A549 (cell line): ENCODE measurements at regions of chr1 and their contacts with region 1.

Region 1: GRCh38 chr1:168082008-168082876 is 54.5 kb downstream of the GPR161 start:
- DNase-seq: peak; percentile 75 to 77
- ATAC-seq: peak; percentile 89 to 92
- H3K4me3 ChIP-seq: no peak overlapping the region
- H3K27ac ChIP-seq: no peak overlapping the region
- H3K4me1 ChIP-seq: no peaks in the 10 kb centered on the region
- CTCF ChIP-seq: peak; percentile 76
- EP300 ChIP-seq: no peak
- POLR2A ChIP-seq: no peak
- RAD21 ChIP-seq: peak; percentile 75 to 85

Region 2: DNA sequence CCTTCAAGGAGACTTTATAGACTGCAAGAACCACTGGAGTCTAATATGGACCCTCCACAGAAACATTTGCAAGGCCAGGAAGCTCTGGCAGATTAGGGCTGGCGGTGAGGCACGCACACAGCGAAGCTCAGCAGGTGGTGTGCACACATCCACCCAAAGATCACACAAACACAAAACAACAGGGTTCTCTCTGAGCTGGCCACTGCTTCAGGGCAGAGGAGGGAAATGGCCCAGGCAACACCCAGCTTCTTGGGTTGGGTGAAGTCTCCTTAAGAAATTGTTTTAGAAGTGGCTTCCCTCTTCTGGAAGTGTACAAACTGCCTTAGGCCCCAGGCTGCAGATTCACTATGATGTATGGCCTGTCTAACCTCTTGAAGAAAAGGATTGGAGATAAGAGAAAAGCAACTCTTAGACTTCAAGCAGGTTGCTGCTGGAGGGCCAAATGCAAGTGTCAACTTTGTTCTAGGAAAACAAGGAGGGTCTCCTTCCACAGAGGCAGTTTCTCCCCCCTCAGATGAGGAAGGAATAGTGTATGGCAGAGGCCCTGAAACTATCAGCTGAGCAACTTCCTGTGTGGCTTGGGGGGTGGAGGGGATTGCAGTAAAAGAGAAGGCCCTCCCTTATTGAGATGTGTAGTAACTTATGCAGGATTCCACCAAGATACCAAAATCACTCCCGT is 450.2 kb before region 1 on chr1:
- CTCF ChIA-PET with region 1: no interaction called
- POLR2A ChIA-PET with region 1: no interaction called
- DNase-seq: no peak
- ATAC-seq: no peak
- H3K4me3 ChIP-seq: no peak overlapping the region
- H3K27ac ChIP-seq: no peak overlapping the region
- H3K4me1 ChIP-seq: peaks cover 7% of the 10 kb centered on the region; the same call in 1 of the 3 replicates
- CTCF ChIP-seq: no peak
- EP300 ChIP-seq: no peak
- POLR2A ChIP-seq: no peak
- RAD21 ChIP-seq: no peak

Region 3: DNA sequence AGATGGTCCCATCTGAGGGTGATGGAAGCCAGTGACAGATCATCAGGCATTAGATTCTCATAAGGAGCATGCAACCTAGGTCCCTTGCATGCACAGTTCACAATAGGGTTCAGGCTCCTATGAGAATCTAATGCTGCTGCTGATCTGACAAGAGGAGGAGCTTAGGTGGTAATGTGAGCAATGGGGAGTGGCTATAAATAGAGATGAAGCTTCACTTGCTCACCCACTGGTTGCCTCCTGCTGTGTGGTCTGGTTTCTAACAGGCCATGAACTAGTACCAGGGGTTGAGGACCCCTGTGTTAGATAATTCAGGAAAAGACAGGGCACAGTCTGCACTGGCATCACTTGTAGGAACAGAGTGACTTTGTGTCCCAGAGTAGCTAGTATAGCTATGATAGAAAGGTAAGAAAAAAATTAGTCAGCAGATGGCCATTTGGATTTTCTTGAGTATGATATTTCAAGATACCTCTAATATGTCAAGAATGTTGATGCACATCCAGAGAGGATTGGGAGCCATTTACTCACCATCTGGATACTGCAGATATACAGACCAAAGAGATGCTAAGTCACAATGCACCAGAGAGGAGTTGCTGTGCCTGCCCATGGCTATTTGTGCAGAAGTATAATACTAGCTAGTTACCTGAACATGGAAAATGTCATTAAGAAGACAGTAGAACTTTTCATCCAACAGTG is 221.9 kb before region 1 on chr1:
- CTCF ChIA-PET with region 1: no interaction called
- POLR2A ChIA-PET with region 1: no interaction called
- DNase-seq: no peak
- ATAC-seq: no peak
- H3K4me3 ChIP-seq: no peak overlapping the region
- H3K27ac ChIP-seq: no peak overlapping the region
- H3K4me1 ChIP-seq: no peaks in the 10 kb centered on the region
- CTCF ChIP-seq: no peak
- EP300 ChIP-seq: no peak
- POLR2A ChIP-seq: no peak
- RAD21 ChIP-seq: no peak

Region 4: GRCh38 chr1:168009322-168009721 is 72.9 kb before region 1 on chr1:
- CTCF ChIA-PET with region 1: interaction called, 11 read pairs
- POLR2A ChIA-PET with region 1: no interaction called
- DNase-seq: no peak
- ATAC-seq: no peak
- H3K4me3 ChIP-seq: no peak overlapping the region
- H3K27ac ChIP-seq: no peak overlapping the region
- H3K4me1 ChIP-seq: no peaks in the 10 kb centered on the region
- CTCF ChIP-seq: no peak
- EP300 ChIP-seq: no peak
- POLR2A ChIP-seq: no peak
- RAD21 ChIP-seq: no peak

Region 5: GRCh38 chr1:168065506-168065905 is 16.7 kb before region 1 on chr1:
- CTCF ChIA-PET with region 1: interaction called, 100 read pairs
- POLR2A ChIA-PET with region 1: no interaction called
- DNase-seq: no peak
- ATAC-seq: no peak
- H3K4me3 ChIP-seq: no peak overlapping the region
- H3K27ac ChIP-seq: no peak overlapping the region
- H3K4me1 ChIP-seq: no peaks in the 10 kb centered on the region
- CTCF ChIP-seq: no peak
- EP300 ChIP-seq: no peak
- POLR2A ChIP-seq: no peak
- RAD21 ChIP-seq: no peak

Region 6: GRCh38 chr1:168092566-168093355 is 10.5 kb after region 1 on chr1:
- CTCF ChIA-PET with region 1: interaction called, 94 read pairs
- POLR2A ChIA-PET with region 1: interaction called, 3 read pairs
- DNase-seq: peak in 1 of 2 experiments; percentile 61
- ATAC-seq: peak; percentile 54 to 78; a peak in 5 of 6 replicates
- H3K4me3 ChIP-seq: no peak overlapping the region
- H3K27ac ChIP-seq: no peak overlapping the region
- H3K4me1 ChIP-seq: peaks cover 13% of the 10 kb centered on the region
- CTCF ChIP-seq: peak; percentile 43
- EP300 ChIP-seq: no peak
- POLR2A ChIP-seq: no peak
- RAD21 ChIP-seq: peak; percentile 52 to 63

Region 7: GRCh38 chr1:168125051-168125450 is 42.8 kb after region 1 on chr1:
- CTCF ChIA-PET with region 1: interaction called, 12 read pairs
- POLR2A ChIA-PET with region 1: no interaction called
- DNase-seq: no peak
- ATAC-seq: no peak
- H3K4me3 ChIP-seq: no peak overlapping the region
- H3K27ac ChIP-seq: no peak overlapping the region
- H3K4me1 ChIP-seq: no peaks in the 10 kb centered on the region
- CTCF ChIP-seq: no peak
- EP300 ChIP-seq: no peak
- POLR2A ChIP-seq: no peak
- RAD21 ChIP-seq: no peak

Region 8: DNA sequence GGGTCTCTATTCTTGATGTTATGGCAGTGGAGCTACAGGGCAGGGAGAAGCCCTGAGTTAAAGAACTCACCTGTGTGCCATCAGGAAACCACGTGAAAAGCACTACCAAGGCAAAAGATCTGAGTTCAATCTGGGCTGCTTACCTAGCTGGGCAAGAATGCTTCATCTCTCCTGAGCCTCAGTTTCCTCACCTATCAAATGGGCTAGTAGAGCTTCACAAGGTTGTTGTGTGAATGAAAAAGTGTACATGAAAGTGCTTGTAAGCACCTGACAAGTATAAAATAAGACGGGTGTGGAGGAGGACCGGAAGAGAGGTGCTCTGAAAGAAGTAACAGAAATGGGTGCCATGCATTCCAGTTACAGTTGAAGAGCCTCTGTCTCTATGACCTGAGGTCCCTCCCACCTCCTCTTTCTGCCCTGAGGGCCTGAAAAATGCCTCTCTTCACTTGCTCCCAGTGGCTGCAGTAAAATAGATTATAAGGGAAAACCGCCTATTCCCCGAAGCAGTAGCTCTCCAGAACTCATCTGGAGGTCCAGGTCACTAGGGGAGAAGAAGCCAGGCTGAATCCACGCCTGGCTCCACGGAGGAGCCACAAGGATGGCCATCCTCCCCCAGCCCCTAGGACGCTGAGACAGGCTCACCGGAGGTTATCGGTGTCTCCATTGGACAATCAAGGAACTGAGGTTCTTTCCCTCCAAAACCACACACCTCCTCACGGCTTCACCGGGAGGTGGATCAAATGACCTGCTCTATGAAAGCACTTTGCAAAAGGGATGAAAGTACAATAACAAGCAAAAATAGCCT is 53.1 kb after region 1 on chr1:
- CTCF ChIA-PET with region 1: interaction called, 10 read pairs
- POLR2A ChIA-PET with region 1: no interaction called
- DNase-seq: no peak
- ATAC-seq: peak; percentile 2 to 34; a peak in 3 of 6 replicates
- H3K4me3 ChIP-seq: peak overlapping the region; percentile 82
- H3K27ac ChIP-seq: peak overlapping the region in 1 of 2 experiments; percentile 92; a peak in 1 of 6 replicates
- H3K4me1 ChIP-seq: peaks cover 16% of the 10 kb centered on the region
- CTCF ChIP-seq: no peak
- EP300 ChIP-seq: no peak
- POLR2A ChIP-seq: no peak
- RAD21 ChIP-seq: no peak

Region 9: DNA sequence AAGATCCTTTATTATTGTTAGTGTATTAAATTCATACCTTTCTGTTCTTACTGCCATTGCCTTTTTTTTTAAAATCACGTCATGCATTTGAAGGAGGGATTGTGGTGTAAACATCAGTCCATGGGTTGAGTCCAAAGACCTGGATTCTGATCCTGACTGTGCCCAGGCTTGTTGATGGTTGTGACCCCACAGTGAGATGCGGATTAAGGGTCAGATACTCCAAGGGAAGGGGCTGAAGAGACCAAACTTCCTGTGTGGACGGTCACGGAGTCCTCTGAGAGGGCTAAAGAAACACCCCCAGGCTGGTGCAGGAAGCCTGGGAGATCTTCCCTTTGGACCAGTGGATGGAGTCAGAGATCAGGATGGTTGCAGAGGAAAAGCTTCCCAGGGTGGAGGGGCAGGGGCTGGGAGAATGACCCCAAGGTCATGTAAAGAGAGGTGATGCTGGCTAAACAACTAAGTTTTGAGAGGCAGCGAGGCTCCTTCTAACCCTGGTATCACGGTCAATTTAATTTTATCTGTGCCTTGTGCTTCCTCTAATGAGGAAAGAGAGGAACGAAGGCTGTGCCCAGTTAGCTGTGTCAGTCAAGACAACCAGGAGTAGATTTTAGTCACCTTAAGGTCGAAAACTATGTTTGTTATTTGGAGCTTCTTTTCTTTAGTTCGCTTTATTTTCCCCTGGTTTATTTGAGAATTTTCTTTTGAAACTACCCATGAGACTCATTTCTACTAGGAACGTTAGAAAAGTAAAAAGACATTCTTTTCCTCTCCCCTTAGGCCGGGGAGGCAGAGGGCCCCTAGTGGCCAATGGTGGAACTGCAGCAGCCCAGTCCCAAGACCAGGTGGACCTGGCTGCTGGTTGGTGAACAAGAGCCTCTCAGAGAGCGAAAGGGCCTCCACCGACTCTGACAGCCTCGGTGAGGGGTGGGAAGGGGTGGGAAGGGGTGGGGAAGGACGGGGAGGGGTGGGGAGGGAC is 63.2 kb after region 1 on chr1:
- CTCF ChIA-PET with region 1: interaction called, 11 read pairs
- POLR2A ChIA-PET with region 1: no interaction called
- DNase-seq: peak; percentile 90 to 93
- ATAC-seq: peak; percentile 99 to 100
- H3K4me3 ChIP-seq: no peak overlapping the region
- H3K27ac ChIP-seq: peak overlapping the region in 1 of 2 experiments; percentile 67; a peak in 3 of 6 replicates
- H3K4me1 ChIP-seq: 0 out of 3 replicates have a peak, but pooled peaks cover 4% of the 10 kb centered on the region
- CTCF ChIP-seq: peak; percentile 70
- EP300 ChIP-seq: no peak
- POLR2A ChIP-seq: no peak
- RAD21 ChIP-seq: peak; percentile 46 to 63; a peak in 4 of 5 replicates